ENCODE measurements at regions of chr7 and their contacts with region 1.

Region 1: DNA sequence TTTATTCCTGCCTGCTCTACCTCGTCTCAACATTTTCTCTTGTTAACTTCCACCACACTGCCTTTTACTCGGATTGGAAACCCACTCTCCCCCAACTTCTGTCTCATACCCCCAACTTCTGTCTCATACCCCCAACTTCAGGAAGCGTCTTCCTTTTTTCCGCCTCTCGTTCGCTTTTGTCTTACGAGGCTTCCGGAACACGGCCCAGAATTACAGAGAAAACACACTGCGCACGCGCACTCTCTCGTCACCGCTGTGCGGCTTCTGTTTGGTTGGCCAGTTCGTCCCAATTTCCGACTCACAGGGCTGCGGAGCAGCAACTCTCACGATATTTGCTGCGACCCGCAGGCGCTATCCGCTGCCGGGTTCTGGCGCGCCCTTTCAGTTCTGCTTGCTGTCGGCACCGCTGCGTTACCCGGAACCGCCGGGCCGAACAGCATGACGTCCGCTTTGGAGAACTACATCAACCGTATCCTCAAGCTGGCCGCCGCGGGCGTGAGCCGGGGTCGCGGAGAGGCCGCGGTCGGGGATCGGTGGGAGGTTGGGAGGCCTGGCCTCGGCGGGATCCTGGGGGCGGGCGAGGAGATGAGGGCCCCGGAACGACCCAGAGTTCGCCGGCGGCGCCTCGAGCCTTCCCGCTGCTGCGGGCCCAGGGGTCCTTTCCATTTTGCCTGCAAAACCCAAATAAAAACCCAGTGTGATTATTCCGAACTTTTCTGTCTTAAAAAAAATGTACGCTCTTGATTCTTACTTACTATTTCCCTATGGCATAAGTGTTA is at the start of gene LSM8:
- DNase-seq: peak; percentile 98
- H3K4me3 Mint-ChIP-seq: peak within 1 kb of the TSS; percentile 98
- H3K27ac Mint-ChIP-seq: peak within 1 kb of the TSS; percentile 99
- H3K4me1 Mint-ChIP-seq: peaks cover 36% of the 10 kb centered on the region
- H3K27me3 Mint-ChIP-seq: peaks cover 2% of the 10 kb centered on the region
- total RNA-seq, gene LSM8: 39.1 TPM

Region 2: GRCh38 chr7:116953727-116954442 is 1230.1 kb before region 1 on chr7:
- CTCF ChIA-PET with region 1: no interaction called
- POLR2A ChIA-PET with region 1: no interaction called
- intact Hi-C with region 1: loop called (anchors 5 kb)
- DNase-seq: peak; percentile 31
- H3K4me3 Mint-ChIP-seq: peak overlapping the region; percentile 92
- H3K27ac Mint-ChIP-seq: peak overlapping the region; percentile 87
- H3K4me1 Mint-ChIP-seq: peaks cover 24% of the 10 kb centered on the region
- H3K27me3 Mint-ChIP-seq: no peaks in the 10 kb centered on the region

Region 3: GRCh38 chr7:118140468-118140867 is 43.5 kb before region 1 on chr7:
- CTCF ChIA-PET with region 1: no interaction called
- POLR2A ChIA-PET with region 1: no interaction called
- intact Hi-C with region 1: no loop called
- DNase-seq: no peak
- H3K4me3 Mint-ChIP-seq: no peak overlapping the region
- H3K27ac Mint-ChIP-seq: no peak overlapping the region
- H3K4me1 Mint-ChIP-seq: no peaks in the 10 kb centered on the region
- H3K27me3 Mint-ChIP-seq: peaks cover 12% of the 10 kb centered on the region

Region 4: DNA sequence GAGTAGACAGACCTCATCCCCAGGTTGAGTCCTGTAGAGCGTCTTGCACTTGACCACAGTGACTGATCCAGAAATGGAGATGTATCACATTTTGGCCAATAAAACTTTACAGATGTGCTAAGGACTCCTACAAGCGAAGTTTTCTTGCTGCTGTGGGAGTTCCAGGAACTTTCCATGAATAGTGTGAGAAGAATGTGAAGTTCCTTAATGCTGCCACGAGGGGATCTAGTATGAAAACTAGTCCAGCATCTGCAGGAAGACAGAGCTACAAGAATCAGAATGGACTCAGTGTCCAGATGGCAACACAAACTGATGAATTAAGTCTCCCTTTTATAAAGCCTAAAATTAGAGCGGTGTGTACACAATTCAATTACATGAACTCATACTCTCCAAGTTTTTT is 14.8 kb before region 1 on chr7:
- CTCF ChIA-PET with region 1: no interaction called
- POLR2A ChIA-PET with region 1: no interaction called
- intact Hi-C with region 1: no loop called
- DNase-seq: no peak
- H3K4me3 Mint-ChIP-seq: no peak overlapping the region
- H3K27ac Mint-ChIP-seq: no peak overlapping the region
- H3K4me1 Mint-ChIP-seq: no peaks in the 10 kb centered on the region
- H3K27me3 Mint-ChIP-seq: peaks cover 32% of the 10 kb centered on the region

Region 5: DNA sequence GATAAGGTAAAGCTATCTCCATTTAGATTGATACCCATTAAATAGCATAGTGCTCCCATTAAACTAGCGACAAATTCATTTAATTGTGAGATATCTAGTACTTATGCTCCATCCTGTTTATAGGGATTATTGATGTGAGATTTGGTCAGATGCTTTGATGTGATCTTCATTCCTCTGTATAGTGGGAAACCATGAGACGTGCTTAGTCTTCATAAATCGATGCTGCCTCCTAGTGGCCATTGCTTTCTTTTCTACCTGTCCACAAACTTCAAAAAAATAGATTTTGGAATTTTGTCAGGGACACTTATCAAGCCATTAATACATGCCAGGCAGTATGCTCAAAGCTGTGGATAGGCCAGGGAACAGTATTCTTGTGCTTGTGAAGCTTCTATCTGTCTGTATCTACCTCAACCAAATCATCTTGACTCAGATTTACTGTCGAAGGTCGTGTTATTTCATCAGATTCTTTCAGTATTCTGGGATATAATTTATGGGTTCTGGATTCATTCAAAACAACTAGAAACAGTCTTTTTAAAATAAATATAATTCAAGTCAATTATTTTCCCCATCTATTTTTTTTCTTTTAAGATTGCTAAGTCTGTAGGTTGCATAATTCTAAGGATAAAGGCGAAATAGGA is 12.0 kb after region 1 on chr7:
- CTCF ChIA-PET with region 1: interaction called, 3 read pairs
- POLR2A ChIA-PET with region 1: no interaction called
- intact Hi-C with region 1: loop called (anchors 1 kb)
- DNase-seq: peak; percentile 46
- H3K4me3 Mint-ChIP-seq: no peak overlapping the region
- H3K27ac Mint-ChIP-seq: no peak overlapping the region
- H3K4me1 Mint-ChIP-seq: peaks cover 3% of the 10 kb centered on the region
- H3K27me3 Mint-ChIP-seq: no peaks in the 10 kb centered on the region

Region 6: GRCh38 chr7:118214051-118214832 is 30.3 kb after region 1 on chr7:
- CTCF ChIA-PET with region 1: no interaction called
- POLR2A ChIA-PET with region 1: no interaction called
- intact Hi-C with region 1: no loop called
- DNase-seq: peak; percentile 71
- H3K4me3 Mint-ChIP-seq: peak overlapping the region; percentile 74
- H3K27ac Mint-ChIP-seq: peak overlapping the region; percentile 52
- H3K4me1 Mint-ChIP-seq: peaks cover 13% of the 10 kb centered on the region
- H3K27me3 Mint-ChIP-seq: peaks cover 22% of the 10 kb centered on the region

Region 7: DNA sequence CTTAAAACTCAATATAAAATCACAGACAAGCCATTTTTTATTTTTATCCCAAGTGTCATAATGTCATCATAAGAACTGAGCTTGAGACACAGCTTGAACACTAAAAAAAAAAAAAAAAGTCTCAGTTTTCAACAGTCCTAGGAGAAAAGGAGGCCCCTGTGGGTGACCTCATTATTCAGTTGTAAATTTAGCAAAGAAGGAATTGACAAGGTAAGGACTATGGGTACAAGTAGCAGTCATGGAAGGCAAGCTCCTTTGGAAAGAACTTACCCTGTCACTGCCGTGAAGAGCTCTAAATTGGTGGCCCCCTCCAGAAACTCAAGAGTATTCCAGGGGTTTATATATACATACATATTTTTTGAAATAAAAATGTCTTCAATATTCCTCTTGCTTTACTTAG is 1224.6 kb after region 1 on chr7:
- CTCF ChIA-PET with region 1: no interaction called
- POLR2A ChIA-PET with region 1: no interaction called
- intact Hi-C with region 1: no loop called
- DNase-seq: no peak
- H3K4me3 Mint-ChIP-seq: no peak overlapping the region
- H3K27ac Mint-ChIP-seq: no peak overlapping the region
- H3K4me1 Mint-ChIP-seq: no peaks in the 10 kb centered on the region
- H3K27me3 Mint-ChIP-seq: no peaks in the 10 kb centered on the region